GM12878 (cell line): ENCODE measurements at regions of chr1 and their contacts with region 1.

Region 1: GRCh38 chr1:103514920-103515503 is 10.5 kb upstream of the RNPC3 start:
- DNase-seq: peak; percentile 35
- ATAC-seq: peak; percentile 80
- H3K4me3 ChIP-seq: no peak overlapping the region
- H3K27ac ChIP-seq: no peak overlapping the region
- H3K4me1 ChIP-seq: no peaks in the 10 kb centered on the region
- H3K27me3 ChIP-seq: no peaks in the 10 kb centered on the region
- CTCF ChIP-seq: peak; percentile 62 to 87 (median 70)
- EP300 ChIP-seq: no peak
- POLR2A ChIP-seq: no peak
- RAD21 ChIP-seq: peak; percentile 99

Region 2: GRCh38 chr1:103106426-103107341 is 408.3 kb before region 1 on chr1:
- CTCF ChIA-PET with region 1: interaction called, 32 read pairs
- POLR2A ChIA-PET with region 1: no interaction called
- RAD21 ChIA-PET with region 1: interaction called, 3 read pairs
- SMC1A ChIA-PET with region 1: interaction called, 8 read pairs
- in situ Hi-C with region 1: loop called (anchors 5 kb)
- intact Hi-C with region 1: loop called (anchors 1 kb)
- DNase-seq: no peak
- ATAC-seq: peak; percentile 87
- H3K4me3 ChIP-seq: no peak overlapping the region
- H3K27ac ChIP-seq: no peak overlapping the region
- H3K4me1 ChIP-seq: no peaks in the 10 kb centered on the region
- H3K27me3 ChIP-seq: peaks cover 0 to 9% of the 10 kb centered on the region in 2 experiments; a peak in 2 of 4 replicates
- CTCF ChIP-seq: peak; percentile 31 to 45 (median 34); a peak in 3 of 6 replicates
- EP300 ChIP-seq: no peak
- POLR2A ChIP-seq: no peak
- RAD21 ChIP-seq: peak; percentile 45

Region 3: GRCh38 chr1:103372866-103373265 is 142.1 kb before region 1 on chr1:
- CTCF ChIA-PET with region 1: no interaction called
- POLR2A ChIA-PET with region 1: no interaction called
- RAD21 ChIA-PET with region 1: no interaction called
- SMC1A ChIA-PET with region 1: no interaction called
- in situ Hi-C with region 1: no loop called
- intact Hi-C with region 1: no loop called
- DNase-seq: no peak
- ATAC-seq: no peak
- H3K4me3 ChIP-seq: no peak overlapping the region
- H3K27ac ChIP-seq: no peak overlapping the region
- H3K4me1 ChIP-seq: no peaks in the 10 kb centered on the region
- H3K27me3 ChIP-seq: no peaks in the 10 kb centered on the region
- CTCF ChIP-seq: no peak
- EP300 ChIP-seq: no peak
- POLR2A ChIP-seq: no peak
- RAD21 ChIP-seq: no peak

Region 4: DNA sequence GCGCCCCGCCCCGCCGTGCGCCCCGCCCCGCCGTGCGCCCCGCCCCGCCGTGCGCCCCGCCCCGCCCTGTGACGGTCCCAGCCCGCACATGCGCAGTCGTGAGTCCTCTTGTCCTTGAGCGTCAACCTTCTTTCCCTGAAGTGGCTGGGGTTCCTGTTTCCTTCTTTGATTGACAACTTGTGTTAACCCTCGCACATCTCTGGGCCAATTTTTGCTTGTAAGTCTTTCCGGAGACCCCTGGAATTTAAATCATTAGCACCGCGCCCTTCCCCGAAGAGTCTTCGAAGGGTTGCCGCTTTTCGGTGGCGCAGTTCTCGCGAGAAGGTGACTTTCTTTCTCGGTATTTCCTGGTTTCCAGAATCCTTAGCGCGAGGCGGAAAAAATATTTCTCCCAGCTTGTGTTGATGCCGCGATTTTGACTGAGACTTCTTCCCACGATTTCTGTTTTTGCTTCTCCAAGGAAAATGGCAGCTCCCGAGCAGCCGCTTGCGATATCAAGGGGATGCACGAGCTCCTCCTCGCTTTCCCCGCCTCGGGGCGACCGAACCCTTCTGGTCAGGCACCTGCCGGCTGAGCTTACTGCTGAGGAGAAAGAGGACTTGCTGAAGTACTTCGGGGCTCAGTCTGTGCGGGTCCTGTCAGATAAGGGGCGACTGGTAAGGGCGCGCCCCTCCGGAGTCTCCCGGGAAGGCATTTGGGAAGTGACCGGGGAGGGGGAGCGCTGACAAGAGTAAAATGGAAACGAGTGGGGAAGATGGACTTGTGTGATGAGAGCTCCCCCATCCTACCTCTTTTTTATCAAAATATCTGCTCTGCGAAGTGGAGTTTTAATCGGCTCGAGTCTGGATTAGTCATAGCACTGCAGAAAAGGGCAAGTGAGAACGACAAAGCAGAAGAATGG is 10.8 kb after region 1 on chr1 and contains the start of gene RNPC3:
- CTCF ChIA-PET with region 1: interaction called, 25 read pairs
- POLR2A ChIA-PET with region 1: interaction called, 8 read pairs
- RAD21 ChIA-PET with region 1: interaction called, 21 read pairs
- SMC1A ChIA-PET with region 1: interaction called, 18 read pairs
- in situ Hi-C with region 1: no loop called
- intact Hi-C with region 1: no loop called
- DNase-seq: peak; percentile 63
- ATAC-seq: peak; percentile 78
- H3K4me3 ChIP-seq: peak within 1 kb of the TSS; percentile 89
- H3K27ac ChIP-seq: peak within 1 kb of the TSS; percentile 97
- H3K4me1 ChIP-seq: no peaks in the 10 kb centered on the region; the same call in 1 of the 2 replicates
- H3K27me3 ChIP-seq: no peaks in the 10 kb centered on the region
- CTCF ChIP-seq: peak; percentile 3 to 16 (median 12); a peak in 1 of 6 replicates
- EP300 ChIP-seq: no peak
- POLR2A ChIP-seq: peak; percentile 64
- RAD21 ChIP-seq: peak; percentile 45
- polyA plus RNA-seq, gene RNPC3: 19.1 to 21.8 TPM